IMR-90 (cell line): ENCODE measurements at regions of chr7 and their contacts with region 1.

Region 1: GRCh38 chr7:134690016-134690415 is 43.4 kb downstream of the BPGM start:
- DNase-seq: peak; percentile 81
- ATAC-seq: peak; percentile 77
- H3K4me3 ChIP-seq: no peak overlapping the region
- H3K27ac ChIP-seq: peak overlapping the region; percentile 70; the same call in 1 of the 2 replicates
- H3K4me1 ChIP-seq: peaks cover 31% of the 10 kb centered on the region
- H3K27me3 ChIP-seq: no peaks in the 10 kb centered on the region
- CTCF ChIP-seq: peak; percentile 77
- POLR2A ChIP-seq: no peak
- RAD21 ChIP-seq: peak; percentile 79

Region 2: GRCh38 chr7:134284011-134284410 is 406.0 kb before region 1 on chr7:
- CTCF ChIA-PET with region 1: no interaction called
- POLR2A ChIA-PET with region 1: no interaction called
- dilution Hi-C with region 1: no loop called
- in situ Hi-C with region 1: no loop called
- intact Hi-C with region 1: no loop called
- DNase-seq: no peak
- ATAC-seq: no peak
- H3K4me3 ChIP-seq: no peak overlapping the region
- H3K27ac ChIP-seq: no peak overlapping the region
- H3K4me1 ChIP-seq: no peaks in the 10 kb centered on the region
- H3K27me3 ChIP-seq: peaks cover 14% of the 10 kb centered on the region
- CTCF ChIP-seq: no peak
- POLR2A ChIP-seq: no peak
- RAD21 ChIP-seq: no peak

Region 3: DNA sequence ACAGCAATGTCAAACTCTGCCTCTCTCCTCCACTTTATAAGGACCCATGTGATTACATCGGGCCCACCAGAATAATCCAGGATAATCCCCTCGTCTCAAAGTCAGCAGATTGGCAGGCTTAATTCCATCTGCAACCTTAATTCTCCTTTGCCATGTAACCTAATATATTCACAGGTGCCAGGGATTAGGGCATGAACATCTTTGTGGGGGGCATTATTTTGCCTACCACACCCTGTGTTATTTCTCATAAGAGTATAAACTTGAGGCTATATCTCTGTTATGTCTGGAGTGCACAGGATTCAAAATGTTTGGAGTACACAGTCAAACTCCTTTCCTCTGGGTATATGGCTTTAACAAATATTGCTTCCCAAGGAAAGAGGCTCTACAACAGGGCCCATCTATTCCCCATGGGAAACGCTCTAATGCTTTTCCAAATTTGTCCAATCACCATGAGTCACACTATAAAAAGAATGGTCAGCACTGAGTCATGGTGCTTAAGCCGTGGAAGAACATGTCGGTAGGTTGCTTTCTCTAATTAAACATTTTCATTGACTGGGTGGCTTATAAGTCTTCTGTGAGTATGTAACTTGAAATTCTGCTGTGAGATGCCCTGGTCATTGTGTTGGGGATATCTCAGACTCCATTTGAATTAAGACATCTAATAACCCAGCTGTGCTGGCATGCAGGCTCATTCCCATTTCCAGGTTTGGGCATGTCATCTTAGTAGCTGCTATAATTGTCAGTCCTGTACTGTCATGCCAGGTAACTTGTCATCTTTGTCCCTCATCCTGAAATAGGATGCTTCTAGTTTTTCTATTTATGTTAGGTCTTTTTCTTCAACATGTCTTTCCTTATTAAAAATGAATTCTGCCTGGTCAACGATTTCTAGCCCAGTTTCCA is 174.2 kb before region 1 on chr7:
- CTCF ChIA-PET with region 1: no interaction called
- POLR2A ChIA-PET with region 1: no interaction called
- dilution Hi-C with region 1: no loop called
- in situ Hi-C with region 1: no loop called
- intact Hi-C with region 1: no loop called
- DNase-seq: peak; percentile 93
- ATAC-seq: peak; percentile 85
- H3K4me3 ChIP-seq: no peak overlapping the region
- H3K27ac ChIP-seq: no peak overlapping the region
- H3K4me1 ChIP-seq: peaks cover 2% of the 10 kb centered on the region; the same call in 1 of the 2 replicates
- H3K27me3 ChIP-seq: no peaks in the 10 kb centered on the region
- CTCF ChIP-seq: no peak
- POLR2A ChIP-seq: no peak
- RAD21 ChIP-seq: no peak

Region 4: GRCh38 chr7:134602881-134603451 is 87.0 kb before region 1 on chr7:
- CTCF ChIA-PET with region 1: no interaction called
- POLR2A ChIA-PET with region 1: no interaction called
- dilution Hi-C with region 1: no loop called
- in situ Hi-C with region 1: no loop called
- intact Hi-C with region 1: no loop called
- DNase-seq: peak; percentile 28
- ATAC-seq: peak; percentile 43
- H3K4me3 ChIP-seq: no peak overlapping the region
- H3K27ac ChIP-seq: no peak overlapping the region
- H3K4me1 ChIP-seq: peaks cover 3% of the 10 kb centered on the region; the same call in 1 of the 2 replicates
- H3K27me3 ChIP-seq: no peaks in the 10 kb centered on the region
- CTCF ChIP-seq: no peak
- POLR2A ChIP-seq: no peak
- RAD21 ChIP-seq: no peak

Region 5: GRCh38 chr7:134632937-134633540 is 57.0 kb before region 1 on chr7:
- CTCF ChIA-PET with region 1: interaction called, 3 read pairs
- POLR2A ChIA-PET with region 1: no interaction called
- dilution Hi-C with region 1: no loop called
- in situ Hi-C with region 1: no loop called
- intact Hi-C with region 1: loop called (anchors 5 kb)
- DNase-seq: peak; percentile 69
- ATAC-seq: peak; percentile 67; the same call in 1 of the 2 replicates
- H3K4me3 ChIP-seq: no peak overlapping the region
- H3K27ac ChIP-seq: no peak overlapping the region
- H3K4me1 ChIP-seq: peaks cover 8% of the 10 kb centered on the region
- H3K27me3 ChIP-seq: no peaks in the 10 kb centered on the region
- CTCF ChIP-seq: peak; percentile 75
- POLR2A ChIP-seq: no peak
- RAD21 ChIP-seq: peak; percentile 87

Region 6: GRCh38 chr7:134750083-134751062 is 60.4 kb after region 1 on chr7:
- CTCF ChIA-PET with region 1: interaction called, 16 read pairs
- POLR2A ChIA-PET with region 1: interaction called, 4 read pairs
- dilution Hi-C with region 1: no loop called
- in situ Hi-C with region 1: no loop called
- intact Hi-C with region 1: loop called (anchors 1 kb)
- DNase-seq: peak; percentile 35
- ATAC-seq: 0 out of 2 replicates have a peak, but pooled peaks have one; percentile 49
- H3K4me3 ChIP-seq: no peak overlapping the region
- H3K27ac ChIP-seq: no peak overlapping the region
- H3K4me1 ChIP-seq: peaks cover 2% of the 10 kb centered on the region; the same call in 1 of the 2 replicates
- H3K27me3 ChIP-seq: no peaks in the 10 kb centered on the region
- CTCF ChIP-seq: peak; percentile 49
- POLR2A ChIP-seq: no peak
- RAD21 ChIP-seq: peak; percentile 49

Region 7: GRCh38 chr7:134827889-134828288 is 137.9 kb after region 1 on chr7:
- CTCF ChIA-PET with region 1: no interaction called
- POLR2A ChIA-PET with region 1: no interaction called
- dilution Hi-C with region 1: no loop called
- in situ Hi-C with region 1: no loop called
- intact Hi-C with region 1: loop called (anchors 5 kb)
- DNase-seq: peak; percentile 84
- ATAC-seq: peak; percentile 60
- H3K4me3 ChIP-seq: no peak overlapping the region
- H3K27ac ChIP-seq: peak overlapping the region; percentile 39; the same call in 1 of the 2 replicates
- H3K4me1 ChIP-seq: peaks cover 30% of the 10 kb centered on the region
- H3K27me3 ChIP-seq: no peaks in the 10 kb centered on the region
- CTCF ChIP-seq: no peak
- POLR2A ChIP-seq: no peak; the same call in 1 of the 2 replicates
- RAD21 ChIP-seq: no peak

Region 8: GRCh38 chr7:134954197-134955082 is 264.4 kb after region 1 on chr7:
- CTCF ChIA-PET with region 1: no interaction called
- POLR2A ChIA-PET with region 1: no interaction called
- dilution Hi-C with region 1: no loop called
- in situ Hi-C with region 1: loop called (anchors 5 kb)
- intact Hi-C with region 1: loop called (anchors 1 kb)
- DNase-seq: peak; percentile 54
- ATAC-seq: peak; percentile 60
- H3K4me3 ChIP-seq: no peak overlapping the region
- H3K27ac ChIP-seq: peak overlapping the region; percentile 7; the same call in 1 of the 2 replicates
- H3K4me1 ChIP-seq: no peaks in the 10 kb centered on the region
- H3K27me3 ChIP-seq: no peaks in the 10 kb centered on the region
- CTCF ChIP-seq: peak; percentile 55
- POLR2A ChIP-seq: no peak
- RAD21 ChIP-seq: peak; percentile 58

Region 9: DNA sequence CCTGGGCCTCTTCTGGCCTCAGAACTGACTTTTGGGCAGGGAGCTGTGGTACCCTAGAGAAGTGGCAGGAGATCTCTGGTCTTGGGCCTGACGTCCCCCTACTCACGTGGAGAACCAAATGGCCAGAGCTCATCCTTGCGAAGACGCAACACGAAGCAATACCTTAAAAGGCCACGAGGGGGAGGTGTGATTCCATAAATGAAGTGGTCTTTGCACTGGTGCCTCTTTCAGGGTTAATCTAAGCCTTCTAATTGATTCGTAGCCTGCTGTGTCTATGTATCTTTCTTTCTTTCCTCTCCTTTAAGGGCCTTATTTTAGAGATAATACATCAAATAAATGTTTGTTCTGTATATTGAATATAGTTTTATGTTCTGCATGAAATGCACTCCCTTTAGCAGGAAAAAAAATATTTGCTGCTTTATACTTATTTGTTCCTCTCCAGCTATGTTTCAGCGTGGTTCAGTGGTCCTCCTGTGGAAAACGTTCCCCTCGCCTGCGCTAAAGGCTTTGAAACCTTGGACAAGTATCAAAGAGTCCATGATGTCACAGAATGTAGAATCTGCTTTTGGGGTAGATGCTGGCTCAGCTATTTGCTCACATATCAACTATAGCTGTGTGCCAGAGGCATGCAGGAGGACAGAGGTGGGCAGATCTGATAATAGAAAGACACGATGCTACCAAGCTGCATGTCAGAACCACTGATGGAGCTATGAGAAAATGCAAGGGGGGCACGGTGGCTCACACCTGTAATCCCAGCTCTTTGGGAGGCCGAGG is 584.7 kb after region 1 on chr7:
- CTCF ChIA-PET with region 1: interaction called, 4 read pairs
- POLR2A ChIA-PET with region 1: no interaction called
- dilution Hi-C with region 1: no loop called
- in situ Hi-C with region 1: loop called (anchors 10 kb)
- intact Hi-C with region 1: loop called (anchors 1 kb)
- DNase-seq: peak; percentile 73
- ATAC-seq: peak; percentile 99
- H3K4me3 ChIP-seq: no peak overlapping the region
- H3K27ac ChIP-seq: no peak overlapping the region
- H3K4me1 ChIP-seq: no peaks in the 10 kb centered on the region
- H3K27me3 ChIP-seq: peaks cover 13% of the 10 kb centered on the region
- CTCF ChIP-seq: peak; percentile 79
- POLR2A ChIP-seq: no peak
- RAD21 ChIP-seq: peak; percentile 79